Naive thymus-derived CD8-positive, alpha-beta T cell (primary cell): ENCODE measurements at regions of chr1 and their contacts with region 1.

Region 1: GRCh38 chr1:183915625-183916510 is 110.9 kb downstream of the RGL1 start:
- DNase-seq: peak; percentile 32 to 85 (median 66)
- ATAC-seq: peak; percentile 91 to 93
- H3K4me3 Mint-ChIP-seq: peak overlapping the region in 4 of 10 donors; percentile 1 to 72 (median 56)
- H3K27ac Mint-ChIP-seq: peak overlapping the region in 6 of 10 donors; percentile 35 to 70 (median 56)
- H3K4me1 Mint-ChIP-seq: peaks cover 2 to 27% (median 11%) of the 10 kb centered on the region in 4 donors
- H3K27me3 Mint-ChIP-seq: no peaks in the 10 kb centered on the region

Region 2: GRCh38 chr1:183655562-183656075 is 260.2 kb before region 1 on chr1:
- POLR2A ChIA-PET with region 1: interaction called, 11 read pairs
- DNase-seq: peak; percentile 43 to 81 (median 70)
- ATAC-seq: peak; percentile 67 to 89
- H3K4me3 Mint-ChIP-seq: no peak overlapping the region
- H3K27ac Mint-ChIP-seq: peak overlapping the region in 1 of 10 donors; percentile 33
- H3K4me1 Mint-ChIP-seq: peaks cover 12 to 36% (median 32%) of the 10 kb centered on the region in 4 donors
- H3K27me3 Mint-ChIP-seq: peaks cover 0 to under 1% (median 0%) of the 10 kb centered on the region in 5 donors

Region 3: GRCh38 chr1:183891158-183891856 is 24.6 kb before region 1 on chr1:
- POLR2A ChIA-PET with region 1: no interaction called
- DNase-seq: no peak
- ATAC-seq: no peak
- H3K4me3 Mint-ChIP-seq: no peak overlapping the region
- H3K27ac Mint-ChIP-seq: no peak overlapping the region
- H3K4me1 Mint-ChIP-seq: peaks cover 21 to 40% (median 37%) of the 10 kb centered on the region in 4 donors
- H3K27me3 Mint-ChIP-seq: no peaks in the 10 kb centered on the region